Activated CD8-positive, alpha-beta T cell treated with anti-CD3 and anti-CD28 coated beads for 36 hours (primary cell): ENCODE measurements at regions of chr18 and their contacts with region 1.

Region 1: GRCh38 chr18:63131106-63131958 is 188.2 kb downstream of the BCL2 start:
- DNase-seq: peak; percentile 79
- ATAC-seq: peak; percentile 59
- H3K4me3 Mint-ChIP-seq: no peak overlapping the region
- H3K27ac Mint-ChIP-seq: peak overlapping the region; percentile 79
- H3K4me1 Mint-ChIP-seq: peaks cover 41% of the 10 kb centered on the region
- H3K27me3 Mint-ChIP-seq: no peaks in the 10 kb centered on the region
- CTCF ChIP-seq: peak; percentile 83

Region 2: GRCh38 chr18:62912885-62913284 is 218.4 kb before region 1 on chr18:
- CTCF ChIA-PET with region 1: no interaction called
- POLR2A ChIA-PET with region 1: no interaction called
- intact Hi-C with region 1: no loop called
- DNase-seq: no peak
- ATAC-seq: peak; percentile 27
- H3K4me3 Mint-ChIP-seq: no peak overlapping the region
- H3K27ac Mint-ChIP-seq: no peak overlapping the region
- H3K4me1 Mint-ChIP-seq: no peaks in the 10 kb centered on the region
- H3K27me3 Mint-ChIP-seq: no peaks in the 10 kb centered on the region
- CTCF ChIP-seq: no peak

Region 3: GRCh38 chr18:63119647-63120046 is 11.7 kb before region 1 on chr18:
- CTCF ChIA-PET with region 1: interaction called, 29 read pairs
- POLR2A ChIA-PET with region 1: interaction called, 6 read pairs
- intact Hi-C with region 1: no loop called
- DNase-seq: peak; percentile 53
- ATAC-seq: peak; percentile 67
- H3K4me3 Mint-ChIP-seq: no peak overlapping the region
- H3K27ac Mint-ChIP-seq: no peak overlapping the region
- H3K4me1 Mint-ChIP-seq: peaks cover 5% of the 10 kb centered on the region
- H3K27me3 Mint-ChIP-seq: peaks cover 10% of the 10 kb centered on the region
- CTCF ChIP-seq: peak; percentile 23

Region 4: DNA sequence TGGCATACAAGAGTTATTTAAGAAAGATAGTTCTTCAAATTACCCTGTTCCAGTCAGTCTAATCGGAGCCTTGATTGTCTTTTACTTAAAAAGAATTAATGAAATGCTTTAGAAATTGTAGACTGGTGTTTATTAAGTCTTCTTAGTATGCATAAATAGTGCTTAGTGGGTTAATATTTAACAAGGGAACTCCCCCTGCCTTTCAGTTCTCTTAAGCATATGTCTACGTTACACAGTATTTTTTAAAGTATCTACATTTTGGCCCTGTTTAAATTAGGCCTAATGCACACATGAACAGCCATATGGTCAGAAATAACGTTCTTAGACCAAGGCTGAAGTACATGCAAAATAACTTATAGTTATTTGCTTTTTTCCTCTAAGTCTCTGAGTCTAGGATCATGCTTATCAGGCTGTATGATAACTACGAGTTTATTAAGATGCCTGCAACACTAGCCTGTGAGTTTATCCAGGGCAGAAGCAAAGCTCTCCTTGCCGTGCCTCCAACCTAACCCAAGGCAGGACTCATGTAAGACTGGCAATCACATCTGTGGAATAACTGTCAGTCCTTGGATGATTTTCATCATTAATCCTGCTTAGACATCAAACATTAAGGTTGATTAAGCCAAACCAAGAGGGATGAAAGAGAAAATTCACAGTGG is 181.5 kb after region 1 on chr18:
- CTCF ChIA-PET with region 1: interaction called, 36 read pairs
- POLR2A ChIA-PET with region 1: interaction called, 7 read pairs
- intact Hi-C with region 1: loop called (anchors 2 kb)
- DNase-seq: no peak
- ATAC-seq: no peak
- H3K4me3 Mint-ChIP-seq: peak overlapping the region; percentile 88
- H3K27ac Mint-ChIP-seq: peak overlapping the region; percentile 72
- H3K4me1 Mint-ChIP-seq: peaks cover 66% of the 10 kb centered on the region
- H3K27me3 Mint-ChIP-seq: no peaks in the 10 kb centered on the region
- CTCF ChIP-seq: no peak

Region 5: GRCh38 chr18:63325086-63325686 is 193.9 kb after region 1 on chr18:
- CTCF ChIA-PET with region 1: interaction called, 36 read pairs
- POLR2A ChIA-PET with region 1: interaction called, 5 read pairs
- intact Hi-C with region 1: no loop called
- DNase-seq: no peak
- ATAC-seq: no peak
- H3K4me3 Mint-ChIP-seq: no peak overlapping the region
- H3K27ac Mint-ChIP-seq: no peak overlapping the region
- H3K4me1 Mint-ChIP-seq: peaks cover 19% of the 10 kb centered on the region
- H3K27me3 Mint-ChIP-seq: no peaks in the 10 kb centered on the region
- CTCF ChIP-seq: no peak

Region 6: GRCh38 chr18:63339920-63340484 is 208.7 kb after region 1 on chr18:
- CTCF ChIA-PET with region 1: interaction called, 13 read pairs
- POLR2A ChIA-PET with region 1: no interaction called
- intact Hi-C with region 1: no loop called
- DNase-seq: peak; percentile 75
- ATAC-seq: peak; percentile 66
- H3K4me3 Mint-ChIP-seq: no peak overlapping the region
- H3K27ac Mint-ChIP-seq: no peak overlapping the region
- H3K4me1 Mint-ChIP-seq: peaks cover 10% of the 10 kb centered on the region
- H3K27me3 Mint-ChIP-seq: no peaks in the 10 kb centered on the region
- CTCF ChIP-seq: peak; percentile 73